ENCODE measurements at regions of chr9 and their contacts with region 1.

Region 1: DNA sequence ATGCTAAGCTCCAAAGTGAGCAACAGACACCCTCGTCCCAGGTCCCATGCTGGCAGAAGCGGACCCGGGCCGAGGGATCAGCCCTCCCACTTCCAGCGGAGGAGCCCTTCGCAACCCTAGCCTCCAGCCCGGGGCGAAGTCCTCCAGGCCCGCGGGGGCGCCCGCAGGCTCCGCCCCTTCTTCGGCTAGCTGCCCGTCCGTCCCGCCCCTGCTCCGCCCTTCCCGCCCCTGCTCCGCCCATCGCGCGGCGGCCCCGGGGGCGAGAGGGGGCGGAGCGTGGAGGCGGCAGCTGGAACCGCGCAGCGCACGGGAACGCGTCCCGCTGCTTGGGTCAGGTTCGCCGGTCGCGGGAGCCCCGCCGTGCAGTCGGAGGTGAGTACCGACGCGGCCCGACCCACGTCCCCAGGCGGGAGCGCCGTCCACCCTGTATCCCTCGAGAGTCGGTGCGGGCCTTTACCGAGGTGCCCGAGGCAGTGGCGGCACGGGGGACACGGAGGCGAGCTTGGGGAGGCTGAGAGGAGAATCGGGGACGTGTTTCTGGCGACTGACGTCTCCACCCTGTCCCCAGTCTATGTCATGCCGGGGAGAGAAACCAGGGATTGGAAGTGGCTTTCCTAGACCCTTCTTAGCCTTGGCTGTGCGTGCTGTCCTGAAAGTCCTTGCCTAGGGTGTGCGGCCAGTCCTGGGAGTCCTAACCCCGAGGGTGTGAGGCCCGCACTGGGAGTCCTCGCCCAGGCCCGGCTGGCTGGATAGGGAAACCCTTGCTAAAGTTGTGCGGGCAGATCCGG is at the start of gene ACO1:
- DNase-seq: peak; percentile 93 to 97 (median 96)
- ATAC-seq: peak; percentile 99 to 100
- H3K4me3 ChIP-seq: peak within 1 kb of the TSS; percentile 45
- H3K27ac ChIP-seq: peak within 1 kb of the TSS; percentile 67
- H3K4me1 ChIP-seq: peaks cover 5% of the 10 kb centered on the region
- H3K27me3 ChIP-seq: no peaks in the 10 kb centered on the region
- total RNA-seq, gene ACO1: 42.2 to 46.3 (median 43.3) TPM

Region 2: GRCh38 chr9:32431940-32432555 is 47.5 kb after region 1 on chr9:
- intact Hi-C with region 1: loop called in 3 of 4 experiments (anchors 5 kb)
- DNase-seq: peak; percentile 40 to 72 (median 63)
- ATAC-seq: peak in 1 of 2 donors; percentile 67
- H3K4me3 ChIP-seq: no peak overlapping the region
- H3K27ac ChIP-seq: no peak overlapping the region
- H3K4me1 ChIP-seq: no peaks in the 10 kb centered on the region
- H3K27me3 ChIP-seq: no peaks in the 10 kb centered on the region